ENCODE measurements at regions of chr4 and their contacts with region 1.

Region 1: GRCh38 chr4:146637621-146638135 is 1.0 kb upstream of the POU4F2 start:
- DNase-seq: no peak
- H3K4me3 Mint-ChIP-seq: no peak overlapping the region
- H3K27ac Mint-ChIP-seq: peak overlapping the region; percentile 67
- H3K4me1 Mint-ChIP-seq: peaks cover 10% of the 10 kb centered on the region
- H3K27me3 Mint-ChIP-seq: peaks cover 87% of the 10 kb centered on the region

Region 2: GRCh38 chr4:146004730-146005129 is 632.9 kb before region 1 on chr4:
- intact Hi-C with region 1: no loop called
- DNase-seq: no peak
- H3K4me3 Mint-ChIP-seq: no peak overlapping the region
- H3K27ac Mint-ChIP-seq: no peak overlapping the region
- H3K4me1 Mint-ChIP-seq: no peaks in the 10 kb centered on the region
- H3K27me3 Mint-ChIP-seq: peaks cover 7% of the 10 kb centered on the region

Region 3: GRCh38 chr4:146654687-146655520 is 17.2 kb after region 1 on chr4:
- intact Hi-C with region 1: loop called (anchors 2 kb)
- DNase-seq: no peak
- H3K4me3 Mint-ChIP-seq: peak overlapping the region; percentile 71
- H3K27ac Mint-ChIP-seq: no peak overlapping the region
- H3K4me1 Mint-ChIP-seq: peaks cover 6% of the 10 kb centered on the region
- H3K27me3 Mint-ChIP-seq: peaks cover 67% of the 10 kb centered on the region